AG04449 (cell line): ENCODE measurements at regions of chr6 and their contacts with region 1.

Region 1: GRCh38 chr6:131532580-131533039 is 40.4 kb upstream of the ARG1 start:
- DNase-seq: no peak
- H3K4me3 ChIP-seq: no peak overlapping the region
- CTCF ChIP-seq: no peak

Region 2: GRCh38 chr6:131182991-131183425 is 349.6 kb before region 1 on chr6:
- CTCF ChIA-PET with region 1: interaction called, 97 read pairs
- POLR2A ChIA-PET with region 1: no interaction called
- DNase-seq: no peak
- H3K4me3 ChIP-seq: no peak overlapping the region
- CTCF ChIP-seq: peak; percentile 29

Region 3: GRCh38 chr6:131199568-131200272 is 332.9 kb before region 1 on chr6:
- CTCF ChIA-PET with region 1: interaction called, 27 read pairs
- POLR2A ChIA-PET with region 1: no interaction called
- DNase-seq: no peak
- H3K4me3 ChIP-seq: no peak overlapping the region
- CTCF ChIP-seq: peak; percentile 58

Region 4: DNA sequence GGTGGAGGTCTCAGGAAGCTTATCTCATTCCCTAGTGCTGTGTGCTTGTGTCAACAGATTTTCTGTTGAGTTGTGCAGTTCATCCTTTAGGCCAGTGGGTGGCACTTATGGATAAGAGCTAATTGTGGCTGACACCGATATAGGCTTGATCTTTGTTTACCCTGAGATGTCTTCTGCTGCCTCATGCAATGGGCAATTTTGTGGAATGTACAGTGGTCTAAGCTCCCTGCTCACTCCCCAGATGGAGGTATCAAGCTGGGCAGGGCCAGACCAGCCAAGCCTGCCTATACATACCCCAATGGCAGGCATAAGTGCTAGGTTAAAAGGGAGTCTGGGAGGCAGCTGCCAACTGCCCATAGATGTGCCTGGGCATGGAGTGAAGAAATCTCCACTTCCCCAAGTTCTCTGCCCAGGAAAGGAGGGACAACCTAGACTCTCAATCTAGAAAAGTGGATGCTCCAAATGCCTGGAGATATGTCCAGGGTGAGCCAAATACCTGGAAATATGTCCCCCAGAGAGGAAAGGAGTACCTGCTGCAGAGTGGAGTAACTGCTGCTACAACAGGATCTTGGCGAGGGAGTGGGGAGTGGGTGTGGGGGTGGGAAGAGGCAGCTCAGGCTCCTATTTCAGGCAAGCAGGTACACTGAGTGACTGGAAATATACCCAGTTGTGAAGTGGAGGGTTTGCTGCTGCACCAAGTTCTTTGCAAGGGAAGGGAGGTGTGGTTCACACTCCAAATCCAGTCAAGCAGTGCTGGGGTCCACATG is 12.8 kb before region 1 on chr6:
- CTCF ChIA-PET with region 1: interaction called, 24 read pairs
- POLR2A ChIA-PET with region 1: no interaction called
- DNase-seq: no peak
- H3K4me3 ChIP-seq: no peak overlapping the region
- CTCF ChIP-seq: peak; percentile 64

Region 5: DNA sequence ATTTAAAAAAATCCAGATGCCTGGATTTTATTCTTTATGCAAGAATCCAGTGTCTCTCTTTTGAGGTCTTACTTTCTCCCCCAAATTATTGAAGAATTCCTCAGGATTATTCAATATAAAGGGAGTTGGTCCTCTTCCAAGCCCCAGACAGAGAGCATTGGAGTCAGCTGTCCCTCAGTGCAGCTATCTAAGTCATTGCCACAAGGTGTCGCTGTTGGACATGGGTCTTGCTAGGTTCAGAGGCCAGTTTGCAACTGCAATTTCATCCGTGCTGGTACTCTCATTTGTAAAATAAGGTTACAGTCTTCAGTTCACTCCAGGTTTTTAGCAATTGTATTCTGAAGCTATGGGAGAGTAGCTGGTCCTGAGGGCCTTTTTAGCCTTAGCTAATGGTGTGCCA is 390.7 kb after region 1 on chr6:
- CTCF ChIA-PET with region 1: no interaction called
- POLR2A ChIA-PET with region 1: no interaction called
- DNase-seq: no peak
- H3K4me3 ChIP-seq: no peak overlapping the region
- CTCF ChIP-seq: peak; percentile 48